WTC11 (cell line): ENCODE measurements at regions of chr3 and their contacts with region 1.

Region 1: DNA sequence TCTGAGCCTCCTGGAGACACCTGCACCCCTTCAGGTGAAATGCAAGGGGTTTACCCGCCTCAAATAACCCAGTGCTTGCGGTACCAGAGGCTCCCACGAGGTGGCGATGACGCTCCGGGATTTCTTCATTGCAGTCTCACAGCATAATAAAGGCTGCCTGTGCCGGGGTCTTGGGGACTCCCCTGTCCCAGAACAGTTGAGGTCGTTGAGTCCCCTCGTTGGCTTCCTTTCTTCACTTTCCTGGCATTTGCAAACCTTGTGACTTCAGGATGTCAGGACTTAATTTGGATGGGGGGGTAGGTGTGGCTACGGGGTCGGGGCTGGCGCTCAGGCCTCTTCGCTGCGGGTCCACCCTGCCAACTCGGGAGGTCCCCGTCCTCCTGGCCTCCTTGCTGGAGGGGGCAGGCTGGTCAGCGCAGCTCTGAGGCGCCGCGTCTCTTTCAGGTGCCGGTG is 1.3 kb downstream of the GNAT1 start:
- DNase-seq: peak; percentile 95
- ATAC-seq: peak; percentile 46
- H3K4me3 Mint-ChIP-seq: no peak overlapping the region
- H3K27ac Mint-ChIP-seq: no peak overlapping the region
- H3K4me1 Mint-ChIP-seq: peaks cover 6% of the 10 kb centered on the region
- H3K27me3 Mint-ChIP-seq: peaks cover 9% of the 10 kb centered on the region
- CTCF ChIP-seq: peak; percentile 88

Region 2: GRCh38 chr3:50126287-50127211 is 66.2 kb before region 1 on chr3:
- CTCF ChIA-PET with region 1: interaction called, 74 read pairs
- POLR2A ChIA-PET with region 1: interaction called, 3 read pairs
- DNase-seq: no peak
- ATAC-seq: peak; percentile 3; the same call in 1 of the 2 replicates
- H3K4me3 Mint-ChIP-seq: no peak overlapping the region
- H3K27ac Mint-ChIP-seq: no peak overlapping the region
- H3K4me1 Mint-ChIP-seq: peaks cover 38% of the 10 kb centered on the region
- H3K27me3 Mint-ChIP-seq: no peaks in the 10 kb centered on the region
- CTCF ChIP-seq: no peak

Region 3: GRCh38 chr3:50179710-50180109 is 13.0 kb before region 1 on chr3:
- CTCF ChIA-PET with region 1: interaction called, 16 read pairs
- POLR2A ChIA-PET with region 1: no interaction called
- DNase-seq: no peak
- ATAC-seq: no peak
- H3K4me3 Mint-ChIP-seq: no peak overlapping the region
- H3K27ac Mint-ChIP-seq: no peak overlapping the region
- H3K4me1 Mint-ChIP-seq: no peaks in the 10 kb centered on the region
- H3K27me3 Mint-ChIP-seq: no peaks in the 10 kb centered on the region
- CTCF ChIP-seq: no peak

Region 4: DNA sequence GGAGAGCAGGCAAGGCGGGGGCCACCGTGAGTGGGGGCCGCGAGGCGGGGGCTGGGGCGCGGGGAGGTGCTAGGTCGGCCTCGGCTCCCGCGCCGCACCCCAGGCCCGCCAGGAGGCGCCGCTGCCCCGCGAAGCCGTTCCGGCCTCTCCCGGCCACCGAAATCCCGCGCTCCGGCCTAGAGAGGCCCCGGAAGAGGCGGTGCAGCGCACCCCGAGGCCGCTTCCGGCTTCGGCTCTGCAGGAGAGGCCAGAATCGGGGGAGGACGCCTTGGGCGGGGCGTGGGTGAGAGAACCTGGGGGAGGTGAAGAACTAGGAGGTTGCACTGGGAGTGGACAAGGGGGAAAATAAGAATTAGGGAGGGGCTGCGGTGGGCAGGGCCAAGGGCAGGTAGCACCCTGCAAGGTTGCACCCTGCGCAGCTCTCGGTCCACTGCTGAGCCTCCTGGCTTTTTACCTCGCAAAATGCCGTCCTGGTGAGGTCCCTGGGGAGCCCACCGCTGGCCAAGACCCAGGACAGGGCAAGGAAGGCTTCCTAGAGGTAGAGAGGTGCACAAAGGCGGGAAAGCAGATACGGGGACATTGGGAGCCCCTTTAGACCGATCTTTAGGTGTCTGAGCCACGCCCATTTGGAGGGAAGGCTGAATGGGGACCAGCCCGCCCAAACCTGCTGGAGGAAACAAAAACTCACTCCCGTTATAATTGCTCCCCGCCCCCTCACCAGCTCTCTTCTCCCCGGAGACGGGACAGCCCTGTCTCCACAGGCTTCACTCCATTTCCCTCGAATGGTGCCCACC is 34.9 kb after region 1 on chr3:
- CTCF ChIA-PET with region 1: interaction called, 604 read pairs
- POLR2A ChIA-PET with region 1: interaction called, 5 read pairs
- DNase-seq: peak; percentile 92
- ATAC-seq: peak; percentile 75
- H3K4me3 Mint-ChIP-seq: peak overlapping the region; percentile 96
- H3K27ac Mint-ChIP-seq: peak overlapping the region; percentile 89
- H3K4me1 Mint-ChIP-seq: peaks cover 24% of the 10 kb centered on the region
- H3K27me3 Mint-ChIP-seq: peaks cover 4% of the 10 kb centered on the region
- CTCF ChIP-seq: peak; percentile 61

Region 5: DNA sequence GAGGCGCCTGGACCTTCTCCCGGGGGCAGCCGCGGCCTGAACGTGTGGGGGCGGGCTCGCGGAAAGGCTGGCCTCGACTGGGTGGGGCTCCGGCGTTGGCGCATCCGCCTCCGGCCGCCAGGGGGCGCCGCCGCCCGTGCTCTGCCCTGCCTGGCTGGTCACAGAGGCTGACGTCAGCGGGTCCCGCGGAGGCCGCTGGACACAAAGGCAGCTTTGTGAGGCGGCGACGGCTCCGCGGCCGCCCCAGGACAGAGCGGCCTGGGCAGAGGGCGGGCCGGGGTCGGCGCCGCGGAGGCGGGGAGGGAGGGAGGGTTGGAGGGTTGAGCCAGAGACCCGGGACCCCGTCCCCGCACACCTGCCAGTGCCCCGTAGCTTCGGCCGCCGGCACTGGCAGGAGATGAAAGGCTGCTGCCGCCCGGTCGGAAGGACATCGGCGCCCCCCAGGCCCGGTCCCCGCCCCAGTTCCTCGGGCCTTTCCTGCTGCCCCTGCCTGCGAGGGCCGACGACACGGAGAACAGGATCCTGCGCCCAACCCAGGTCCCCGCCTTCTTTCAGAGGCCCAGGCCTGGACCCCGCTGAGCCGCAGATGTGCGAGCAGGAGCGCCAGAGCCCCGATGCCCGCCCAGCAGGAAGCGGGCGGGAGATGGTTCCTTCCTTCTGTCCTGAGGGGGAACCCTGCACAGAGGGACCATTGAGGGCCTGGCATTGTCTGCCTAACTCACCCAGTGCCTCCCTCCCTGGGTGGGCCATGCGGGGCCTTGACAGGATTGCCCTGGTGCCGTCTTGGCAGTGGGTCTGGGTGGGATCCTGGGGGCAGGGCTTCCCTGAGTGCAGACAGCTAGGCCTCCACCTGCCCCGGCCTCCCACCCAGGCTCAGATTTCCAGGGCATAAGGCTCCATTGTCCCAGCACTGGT is 67.6 kb after region 1 on chr3:
- CTCF ChIA-PET with region 1: interaction called, 61 read pairs
- POLR2A ChIA-PET with region 1: interaction called, 7 read pairs
- DNase-seq: peak; percentile 94
- ATAC-seq: peak; percentile 42
- H3K4me3 Mint-ChIP-seq: peak overlapping the region; percentile 64
- H3K27ac Mint-ChIP-seq: no peak overlapping the region
- H3K4me1 Mint-ChIP-seq: peaks cover 31% of the 10 kb centered on the region
- H3K27me3 Mint-ChIP-seq: no peaks in the 10 kb centered on the region
- CTCF ChIP-seq: peak; percentile 98